ENCODE measurements at regions of chr18 and their contacts with region 1.

Region 1: GRCh38 chr18:10015941-10016819 is 102.4 kb downstream of the VAPA start:
- DNase-seq: no peak
- ATAC-seq: peak; percentile 84

Region 2: GRCh38 chr18:10051877-10052631 is 35.9 kb after region 1 on chr18:
- intact Hi-C with region 1: loop called (anchors 5 kb)
- DNase-seq: no peak
- ATAC-seq: peak; percentile 93

Region 3: GRCh38 chr18:10131460-10132395 is 115.5 kb after region 1 on chr18:
- intact Hi-C with region 1: loop called (anchors 10 kb)
- DNase-seq: no peak
- ATAC-seq: peak; percentile 68